ENCODE measurements at regions of chr7 and their contacts with region 1.

Region 1: DNA sequence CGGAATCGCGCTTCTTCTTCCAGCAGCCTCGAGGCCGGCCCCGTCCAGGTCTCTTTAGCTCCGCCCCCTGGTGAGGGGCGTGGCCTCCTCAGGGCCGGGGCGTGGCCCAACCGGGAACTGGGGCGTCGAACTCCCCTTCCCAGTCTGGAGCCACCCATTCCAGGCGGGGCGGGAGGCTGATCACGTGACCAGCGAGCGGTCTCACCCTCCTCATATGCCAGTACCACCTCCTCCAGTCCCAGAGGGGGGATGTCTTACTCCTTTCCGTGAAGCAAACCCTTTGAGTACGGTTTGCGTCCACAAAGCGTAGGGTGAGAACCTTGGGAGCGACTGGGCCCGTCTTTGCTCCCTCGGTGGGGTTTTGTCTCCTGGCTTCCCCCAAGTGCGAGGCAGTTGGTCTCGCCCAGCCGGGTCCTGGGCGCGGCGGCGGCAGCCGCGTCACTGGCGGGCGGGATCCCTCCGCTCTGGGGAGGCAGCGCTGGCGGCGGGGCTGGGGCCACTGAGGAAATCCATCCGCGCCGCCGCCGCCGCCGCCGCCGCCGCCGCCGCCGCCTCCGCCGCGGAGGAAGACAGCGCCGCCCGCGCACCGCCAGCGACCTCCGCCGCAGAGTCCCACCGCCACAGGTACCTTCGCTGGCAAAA is at the start of gene GNB2:
- DNase-seq: peak; percentile 100
- H3K4me3 Mint-ChIP-seq: peak within 1 kb of the TSS; percentile 96
- H3K27ac Mint-ChIP-seq: peak within 1 kb of the TSS; percentile 94
- H3K4me1 Mint-ChIP-seq: peaks cover 12% of the 10 kb centered on the region
- H3K27me3 Mint-ChIP-seq: peaks cover 14% of the 10 kb centered on the region
- total RNA-seq, gene GNB2: 205 and 211 TPM in 2 replicates

Region 2: DNA sequence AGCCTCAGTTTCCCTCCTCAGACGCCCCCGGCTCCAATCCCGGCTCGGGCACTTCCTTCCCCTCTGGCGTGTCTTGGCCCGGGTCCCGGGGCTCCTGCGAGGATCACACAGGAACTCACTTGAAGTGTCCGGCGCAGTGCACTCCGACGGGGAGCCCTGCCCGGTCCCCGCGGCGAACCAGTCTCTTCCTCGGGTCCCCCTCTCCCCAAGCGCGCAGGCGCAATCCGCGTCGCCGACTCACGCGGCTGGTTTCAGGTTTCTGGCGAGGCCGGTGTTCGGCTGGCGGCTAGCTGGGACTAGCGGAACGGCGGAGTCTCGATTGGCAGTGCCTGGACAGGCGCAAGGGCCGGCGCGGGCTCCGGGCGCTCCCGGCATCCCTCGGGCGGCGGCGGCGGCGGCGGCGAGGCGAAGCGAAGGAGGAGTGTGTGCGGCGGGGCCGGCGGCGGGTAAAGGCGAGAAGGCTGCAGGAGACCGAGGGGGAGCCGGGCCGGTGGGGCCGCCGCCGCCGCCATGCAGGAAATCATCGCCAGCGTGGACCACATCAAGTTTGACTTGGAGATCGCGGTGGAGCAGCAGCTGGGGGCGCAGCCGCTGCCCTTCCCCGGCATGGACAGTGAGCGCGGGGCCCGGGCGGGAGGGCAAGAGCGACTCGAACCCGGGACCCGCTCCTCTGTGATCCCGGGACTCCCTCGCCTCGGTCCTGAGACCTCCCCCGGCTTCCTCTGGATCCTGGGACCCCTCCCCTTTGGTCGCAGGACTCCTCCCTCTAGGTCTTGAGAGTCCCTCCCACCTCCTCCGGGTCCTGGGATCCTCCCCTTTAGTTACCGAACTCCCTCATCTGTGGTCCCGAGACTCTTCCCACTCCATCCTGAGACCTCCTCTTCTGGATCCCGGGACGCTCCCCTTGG is 1234.6 kb before region 1 on chr7 and contains the starts of genes CPSF4 and PTCD1:
- intact Hi-C with region 1: no loop called
- DNase-seq: peak; percentile 97
- H3K4me3 Mint-ChIP-seq: peak within 1 kb of the TSS; percentile 96
- H3K27ac Mint-ChIP-seq: peak within 1 kb of the TSS; percentile 89
- H3K4me1 Mint-ChIP-seq: peaks cover 23% of the 10 kb centered on the region
- H3K27me3 Mint-ChIP-seq: no peaks in the 10 kb centered on the region
- total RNA-seq, gene CPSF4: 83.5 and 89.0 TPM in 2 replicates
- total RNA-seq, gene PTCD1: 10.5 and 10.7 TPM in 2 replicates

Region 3: GRCh38 chr7:100478966-100479665 is 194.3 kb before region 1 on chr7 and contains the start of gene TSC22D4:
- intact Hi-C with region 1: loop called (anchors 2 kb)
- DNase-seq: peak; percentile 96
- H3K4me3 Mint-ChIP-seq: peak within 1 kb of the TSS; percentile 92
- H3K27ac Mint-ChIP-seq: peak within 1 kb of the TSS; percentile 88
- H3K4me1 Mint-ChIP-seq: peaks cover 35% of the 10 kb centered on the region
- H3K27me3 Mint-ChIP-seq: no peaks in the 10 kb centered on the region
- total RNA-seq, gene TSC22D4: 113 and 121 TPM in 2 replicates

Region 4: GRCh38 chr7:100611974-100612729 is 61.3 kb before region 1 on chr7 and contains the start of gene MOSPD3:
- intact Hi-C with region 1: loop called (anchors 1 kb)
- DNase-seq: peak; percentile 100
- H3K4me3 Mint-ChIP-seq: peak within 1 kb of the TSS; percentile 97
- H3K27ac Mint-ChIP-seq: peak within 1 kb of the TSS; percentile 100
- H3K4me1 Mint-ChIP-seq: peaks cover 18% of the 10 kb centered on the region
- H3K27me3 Mint-ChIP-seq: peaks cover 9% of the 10 kb centered on the region
- total RNA-seq, gene MOSPD3: 11.3 and 12.1 TPM in 2 replicates

Region 5: DNA sequence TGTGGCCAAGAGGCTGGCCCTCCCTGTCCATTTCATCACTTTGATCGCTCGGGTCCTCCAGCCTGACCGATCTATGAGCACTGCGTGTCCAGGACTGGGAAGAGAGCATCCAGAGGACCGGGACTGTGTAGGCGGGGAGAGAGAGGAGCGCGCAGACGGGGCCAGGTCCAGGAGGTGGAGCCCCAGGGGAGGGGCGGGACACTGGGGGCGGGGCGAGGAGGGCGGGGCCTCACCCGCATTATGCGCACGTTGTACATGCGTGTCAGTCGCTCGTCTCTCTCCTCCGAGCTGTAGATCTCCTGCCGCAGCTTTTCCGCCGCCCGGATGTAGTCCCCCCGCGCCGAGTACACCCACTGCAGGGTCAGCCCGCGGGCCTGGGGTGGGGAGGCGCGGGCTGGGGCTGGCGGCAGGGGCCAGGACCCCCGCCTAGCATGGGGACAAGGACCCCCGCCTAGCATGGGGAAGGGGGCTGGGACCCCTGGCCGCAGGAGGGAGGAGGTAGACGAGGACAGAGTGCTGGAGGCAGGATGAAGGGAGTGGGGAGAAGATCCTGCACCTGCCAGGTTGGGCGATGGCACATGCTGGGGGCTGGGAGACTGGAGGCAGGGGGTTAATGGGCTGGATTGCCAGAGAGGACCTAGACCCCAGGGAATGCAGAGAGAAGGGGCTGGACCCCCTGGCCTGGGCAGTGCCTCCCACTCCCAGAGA is 46.7 kb before region 1 on chr7:
- intact Hi-C with region 1: loop called (anchors 1 kb)
- DNase-seq: peak; percentile 94
- H3K4me3 Mint-ChIP-seq: peak overlapping the region; percentile 82
- H3K27ac Mint-ChIP-seq: peak overlapping the region; percentile 76
- H3K4me1 Mint-ChIP-seq: peaks cover 42% of the 10 kb centered on the region
- H3K27me3 Mint-ChIP-seq: no peaks in the 10 kb centered on the region

Region 6: GRCh38 chr7:100642534-100642907 is 30.9 kb before region 1 on chr7:
- intact Hi-C with region 1: no loop called
- DNase-seq: peak; percentile 77
- H3K4me3 Mint-ChIP-seq: no peak overlapping the region
- H3K27ac Mint-ChIP-seq: no peak overlapping the region
- H3K4me1 Mint-ChIP-seq: no peaks in the 10 kb centered on the region
- H3K27me3 Mint-ChIP-seq: peaks cover 3% of the 10 kb centered on the region

Region 7: DNA sequence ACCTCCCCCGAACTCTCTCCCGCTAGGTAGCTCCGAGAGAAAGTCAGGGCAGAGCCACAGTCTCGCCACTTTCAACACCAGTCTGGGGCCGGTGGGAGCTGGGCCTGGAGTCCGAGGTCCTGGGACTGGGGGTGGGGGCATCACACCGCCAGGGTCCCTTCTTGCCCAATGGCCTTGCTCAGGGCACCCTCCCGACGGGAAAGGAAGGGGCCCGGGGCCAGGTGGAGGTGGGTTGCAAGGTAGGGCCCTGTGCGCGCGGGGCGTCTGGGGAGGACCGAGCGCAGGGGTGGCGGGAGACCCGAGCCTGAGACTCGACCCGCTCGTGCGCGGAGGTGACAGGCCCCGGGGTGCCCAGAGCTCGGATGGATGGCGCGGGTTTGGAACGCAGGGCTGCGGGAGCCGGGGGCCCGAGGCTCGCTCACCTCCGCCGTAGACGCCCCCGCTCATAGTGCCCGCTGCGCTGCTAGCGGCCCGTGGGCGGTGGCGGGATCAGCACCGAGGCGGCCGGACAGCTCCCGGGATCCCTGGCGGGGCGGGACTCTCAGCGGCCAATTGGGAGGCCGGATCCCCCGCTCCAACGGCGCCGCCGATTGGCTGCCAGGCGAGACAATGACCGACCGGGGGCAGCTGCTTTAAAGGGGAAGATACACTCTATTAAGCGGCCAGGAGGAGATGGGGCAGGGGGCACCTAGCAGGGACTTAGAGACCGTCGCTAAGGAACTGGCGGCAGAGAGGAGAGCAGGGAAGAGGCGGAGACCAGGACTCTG is 17.3 kb before region 1 on chr7 and contains the start of gene ACTL6B:
- intact Hi-C with region 1: loop called (anchors 2 kb)
- DNase-seq: peak; percentile 93
- H3K4me3 Mint-ChIP-seq: no peak within 1 kb of the TSS
- H3K27ac Mint-ChIP-seq: no peak within 1 kb of the TSS
- H3K4me1 Mint-ChIP-seq: peaks cover 5% of the 10 kb centered on the region
- H3K27me3 Mint-ChIP-seq: peaks cover 33% of the 10 kb centered on the region
- total RNA-seq, gene ACTL6B: not detected in 2 replicates

Region 8: DNA sequence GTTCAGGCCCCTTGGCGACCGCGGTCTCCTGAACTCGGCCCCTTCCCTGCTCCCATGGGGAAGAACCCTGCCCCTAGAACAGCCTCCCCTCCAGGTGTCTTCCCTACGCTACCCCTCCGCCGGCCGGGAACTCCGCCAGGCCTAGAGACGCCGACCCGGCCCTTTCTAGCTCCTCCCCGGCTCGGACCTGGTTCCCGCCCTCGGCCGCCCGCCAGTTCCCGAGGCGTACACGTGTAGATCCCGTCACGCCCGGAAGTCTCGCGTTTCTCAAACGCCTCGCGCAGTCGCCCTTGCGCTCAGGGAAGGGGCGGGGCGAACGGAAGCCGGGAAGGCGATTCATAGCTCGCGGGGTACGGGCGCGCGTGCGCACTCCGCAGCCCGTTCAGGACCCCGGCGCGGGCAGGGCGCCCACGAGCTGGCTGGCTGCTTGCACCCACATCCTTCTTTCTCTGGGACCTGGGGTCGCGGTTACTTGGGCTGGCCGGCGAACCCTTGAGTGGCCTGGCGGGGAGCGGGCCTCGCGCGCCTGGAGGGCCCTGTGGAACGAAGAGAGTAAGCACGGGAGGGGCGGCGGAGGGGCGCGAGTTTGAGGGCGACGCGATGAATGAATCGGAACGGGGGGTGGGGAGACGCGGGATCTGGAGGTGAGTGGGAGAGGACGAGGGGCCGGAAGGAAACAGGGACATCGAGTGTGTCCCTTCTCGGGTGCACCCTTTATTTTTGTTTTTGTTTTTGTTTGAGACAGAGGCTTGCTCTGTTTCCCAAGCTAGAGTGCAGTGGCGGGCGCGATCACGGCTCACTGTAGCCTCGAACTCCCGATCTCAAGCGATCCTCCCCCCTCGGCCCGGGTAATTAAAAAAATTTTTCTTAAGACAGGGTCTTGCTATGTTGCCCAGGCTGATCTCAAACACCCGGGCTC is 32.6 kb after region 1 on chr7 and contains the start of gene POP7:
- intact Hi-C with region 1: loop called (anchors 1 kb)
- DNase-seq: peak; percentile 100
- H3K4me3 Mint-ChIP-seq: peak within 1 kb of the TSS; percentile 99
- H3K27ac Mint-ChIP-seq: peak within 1 kb of the TSS; percentile 98
- H3K4me1 Mint-ChIP-seq: peaks cover 13% of the 10 kb centered on the region
- H3K27me3 Mint-ChIP-seq: peaks cover 7% of the 10 kb centered on the region
- total RNA-seq, gene POP7: 77.3 and 77.7 TPM in 2 replicates